H1 (cell line): ENCODE measurements at regions of chr7 and their contacts with region 1.

Region 1: GRCh38 chr7:151172273-151173141 is 5.0 kb upstream of the GBX1 start:
- DNase-seq: peak in 1 of 2 experiments; percentile 93
- H3K4me3 ChIP-seq: no peak overlapping the region
- H3K27ac ChIP-seq: no peak overlapping the region
- H3K4me1 ChIP-seq: no peaks in the 10 kb centered on the region; a peak in 1 of 7 replicates
- H3K27me3 ChIP-seq: peaks cover 24 to 67% (median 55%) of the 10 kb centered on the region in 4 experiments
- CTCF ChIP-seq: peak in 2 of 3 experiments; percentile 100; a peak in 3 of 4 replicates
- EP300 ChIP-seq: no peak
- POLR2A ChIP-seq: no peak
- RAD21 ChIP-seq: peak; percentile 93 to 97

Region 2: DNA sequence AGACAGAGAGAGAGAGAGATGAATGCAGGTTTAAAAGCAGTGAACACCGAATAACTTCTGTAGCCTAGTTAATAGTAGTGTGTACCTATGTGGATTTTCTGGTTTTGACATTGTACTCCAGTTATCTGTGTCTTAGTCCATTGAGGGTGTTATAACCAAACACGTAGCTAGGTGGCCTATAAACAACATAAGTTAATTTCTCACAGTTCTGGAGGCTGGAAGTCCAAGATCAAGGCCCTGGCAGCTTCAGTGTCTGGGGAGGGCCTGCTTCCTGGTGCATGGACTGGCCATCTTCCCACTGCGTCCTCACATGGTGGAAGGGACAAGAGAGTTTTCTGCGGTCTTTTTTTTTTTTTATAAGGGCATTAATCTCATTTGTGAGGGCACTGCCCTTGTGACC is 296.7 kb before region 1 on chr7:
- CTCF ChIA-PET with region 1: no interaction called
- POLR2A ChIA-PET with region 1: no interaction called
- DNase-seq: no peak
- H3K4me3 ChIP-seq: no peak overlapping the region
- H3K27ac ChIP-seq: no peak overlapping the region
- H3K4me1 ChIP-seq: 0 out of 7 replicates have a peak, but pooled peaks cover 0 to 7% (median 0%) of the 10 kb centered on the region in 4 experiments
- H3K27me3 ChIP-seq: no peaks in the 10 kb centered on the region; a peak in 1 of 7 replicates
- CTCF ChIP-seq: peak in 1 of 3 experiments; percentile 38; a peak in 1 of 4 replicates
- EP300 ChIP-seq: no peak
- POLR2A ChIP-seq: no peak
- RAD21 ChIP-seq: no peak

Region 3: GRCh38 chr7:151080522-151081169 is 91.9 kb before region 1 on chr7 and contains the start of gene FASTK:
- CTCF ChIA-PET with region 1: no interaction called
- POLR2A ChIA-PET with region 1: no interaction called
- DNase-seq: peak in 1 of 2 experiments; percentile 88
- H3K4me3 ChIP-seq: peak within 1 kb of the TSS; percentile 79 to 94 (median 88)
- H3K27ac ChIP-seq: peak within 1 kb of the TSS; percentile 76
- H3K4me1 ChIP-seq: peaks cover 3 to 43% (median 27%) of the 10 kb centered on the region in 4 experiments
- H3K27me3 ChIP-seq: peaks cover 0 to 7% (median 5%) of the 10 kb centered on the region in 4 experiments; a peak in 5 of 7 replicates
- CTCF ChIP-seq: no peak; a peak in 1 of 4 replicates
- EP300 ChIP-seq: 0 out of 3 replicates have a peak, but pooled peaks of 1 of the 2 experiments have one; percentile 42
- POLR2A ChIP-seq: peak in 1 of 2 experiments; percentile 62; a peak in 2 of 3 replicates
- RAD21 ChIP-seq: no peak
- total RNA-seq, gene FASTK: 39.4 and 43.8 TPM in 2 replicates

Region 4: DNA sequence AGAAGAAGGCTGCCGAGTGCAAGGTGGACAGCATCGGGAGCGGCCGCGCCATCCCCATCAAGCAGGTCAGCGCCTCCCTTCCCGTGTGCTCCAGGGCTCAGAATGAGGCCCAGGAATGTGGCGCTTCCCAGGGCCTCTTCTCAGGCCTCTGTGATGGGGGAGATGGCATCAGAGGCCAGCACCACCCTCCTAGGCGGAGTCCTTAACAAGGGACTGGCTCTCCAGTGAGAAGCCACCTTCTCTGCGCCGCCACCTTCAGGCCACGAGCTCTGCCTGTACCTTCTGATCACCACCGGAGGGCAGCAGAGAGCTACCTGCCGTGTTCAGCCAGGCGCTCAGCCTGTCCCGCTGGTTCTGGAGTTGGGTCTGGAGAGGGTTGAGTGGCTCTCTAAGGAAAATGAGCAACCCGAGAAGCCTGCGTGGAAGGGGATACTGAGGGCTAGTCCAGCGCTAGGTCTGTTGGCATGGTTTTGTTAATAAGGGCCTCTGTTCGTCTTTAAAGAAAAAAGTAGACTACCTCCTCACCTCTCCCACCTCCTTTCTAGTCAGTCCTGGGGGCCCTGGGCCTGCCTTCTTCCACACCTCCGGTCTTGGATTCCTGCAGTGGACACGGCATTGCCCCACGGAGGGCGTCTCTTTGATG is 48.6 kb before region 1 on chr7:
- CTCF ChIA-PET with region 1: interaction called, 75 read pairs
- POLR2A ChIA-PET with region 1: interaction called, 6 read pairs
- DNase-seq: peak in 1 of 2 experiments; percentile 94
- H3K4me3 ChIP-seq: no peak overlapping the region
- H3K27ac ChIP-seq: no peak overlapping the region
- H3K4me1 ChIP-seq: peaks cover 0 to 23% (median 7%) of the 10 kb centered on the region in 4 experiments; a peak in 6 of 7 replicates
- H3K27me3 ChIP-seq: peaks cover 0 to 13% (median 4%) of the 10 kb centered on the region in 4 experiments; a peak in 5 of 7 replicates
- CTCF ChIP-seq: peak in 2 of 3 experiments; percentile 99 to 100; a peak in 3 of 4 replicates
- EP300 ChIP-seq: no peak
- POLR2A ChIP-seq: no peak
- RAD21 ChIP-seq: peak; percentile 96 to 98

Region 5: DNA sequence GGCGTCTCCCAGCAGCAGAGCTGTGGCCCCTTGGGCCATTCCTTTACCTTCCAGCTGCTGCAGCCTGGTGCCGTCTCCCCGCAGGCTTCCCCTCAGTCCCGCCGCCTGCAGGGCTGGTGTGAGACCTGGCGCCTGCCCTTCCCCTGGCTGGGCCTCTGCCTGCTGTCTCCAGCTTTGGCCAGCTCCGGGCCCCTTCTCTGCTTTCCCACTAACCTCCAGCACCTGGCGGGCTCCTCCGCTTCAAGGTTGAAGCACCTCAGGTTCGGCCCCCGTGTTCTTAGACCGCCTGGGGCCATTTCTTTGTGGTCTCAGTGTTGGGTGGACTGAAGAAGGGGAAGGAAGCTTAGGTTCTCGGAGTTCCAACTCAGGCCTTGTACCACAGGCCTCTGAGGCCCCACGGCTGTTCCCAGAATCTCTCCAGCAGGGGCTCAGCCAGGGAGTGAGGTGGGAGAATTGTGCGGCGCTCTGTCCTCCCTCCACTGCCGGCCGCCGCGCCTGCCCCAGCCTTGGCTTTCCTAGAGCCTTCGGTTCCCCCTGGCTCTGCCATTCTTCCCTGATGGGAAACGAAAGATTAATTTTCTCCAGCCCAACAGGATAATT is 35.3 kb before region 1 on chr7:
- CTCF ChIA-PET with region 1: interaction called, 70 read pairs
- POLR2A ChIA-PET with region 1: no interaction called
- DNase-seq: no peak
- H3K4me3 ChIP-seq: no peak overlapping the region
- H3K27ac ChIP-seq: no peak overlapping the region
- H3K4me1 ChIP-seq: peaks cover 7 to 28% (median 17%) of the 10 kb centered on the region in 4 experiments
- H3K27me3 ChIP-seq: peaks cover 0 to 1% (median 0%) of the 10 kb centered on the region in 4 experiments; a peak in 1 of 7 replicates
- CTCF ChIP-seq: no peak
- EP300 ChIP-seq: no peak
- POLR2A ChIP-seq: no peak
- RAD21 ChIP-seq: no peak

Region 6: GRCh38 chr7:151143261-151144015 is 29.1 kb before region 1 on chr7:
- CTCF ChIA-PET with region 1: interaction called, 70 read pairs
- POLR2A ChIA-PET with region 1: no interaction called
- DNase-seq: no peak
- H3K4me3 ChIP-seq: no peak overlapping the region
- H3K27ac ChIP-seq: no peak overlapping the region
- H3K4me1 ChIP-seq: peaks cover 3 to 25% (median 12%) of the 10 kb centered on the region in 4 experiments
- H3K27me3 ChIP-seq: 0 out of 7 replicates have a peak, but pooled peaks cover 0 to 1% (median 0%) of the 10 kb centered on the region in 4 experiments
- CTCF ChIP-seq: no peak
- EP300 ChIP-seq: no peak
- POLR2A ChIP-seq: no peak
- RAD21 ChIP-seq: no peak

Region 7: GRCh38 chr7:151152643-151153513 is 19.6 kb before region 1 on chr7:
- CTCF ChIA-PET with region 1: interaction called, 70 read pairs
- POLR2A ChIA-PET with region 1: no interaction called
- DNase-seq: no peak
- H3K4me3 ChIP-seq: no peak overlapping the region
- H3K27ac ChIP-seq: no peak overlapping the region
- H3K4me1 ChIP-seq: no peaks in the 10 kb centered on the region
- H3K27me3 ChIP-seq: peaks cover 0 to 6% (median 2%) of the 10 kb centered on the region in 4 experiments; a peak in 3 of 7 replicates
- CTCF ChIP-seq: peak in 2 of 3 experiments; percentile 4 to 24; a peak in 2 of 4 replicates
- EP300 ChIP-seq: no peak
- POLR2A ChIP-seq: no peak
- RAD21 ChIP-seq: no peak